ENCODE measurements at regions of chr14 and their contacts with region 1.

Region 1: GRCh38 chr14:92612988-92613658 is 99.5 kb downstream of the RIN3 start:
- DNase-seq: peak; percentile 61 to 71 (median 65)
- H3K4me3 ChIP-seq: no peak overlapping the region
- H3K27ac ChIP-seq: no peak overlapping the region
- H3K4me1 ChIP-seq: peaks cover 2 to 47% (median 19%) of the 10 kb centered on the region in 4 experiments
- H3K27me3 ChIP-seq: no peaks in the 10 kb centered on the region

Region 2: GRCh38 chr14:92651106-92651757 is 38.1 kb after region 1 on chr14:
- CTCF ChIA-PET with region 1: interaction called, 43 read pairs
- POLR2A ChIA-PET with region 1: interaction called, 3 read pairs
- DNase-seq: peak; percentile 90 to 98 (median 97)
- H3K4me3 ChIP-seq: peak overlapping the region in 6 of 7 experiments; percentile 29 to 98 (median 58)
- H3K27ac ChIP-seq: peak overlapping the region; percentile 92 to 93
- H3K4me1 ChIP-seq: peaks cover 34 to 92% (median 87%) of the 10 kb centered on the region in 4 experiments
- H3K27me3 ChIP-seq: no peaks in the 10 kb centered on the region

Region 3: GRCh38 chr14:92670160-92670559 is 57.0 kb after region 1 on chr14:
- CTCF ChIA-PET with region 1: interaction called, 15 read pairs
- POLR2A ChIA-PET with region 1: no interaction called
- DNase-seq: peak; percentile 74 to 94 (median 92)
- H3K4me3 ChIP-seq: peak overlapping the region in 3 of 7 experiments; percentile 1 to 31 (median 11)
- H3K27ac ChIP-seq: peak overlapping the region; percentile 26 to 73
- H3K4me1 ChIP-seq: peaks cover 7 to 81% (median 75%) of the 10 kb centered on the region in 4 experiments
- H3K27me3 ChIP-seq: no peaks in the 10 kb centered on the region

Region 4: GRCh38 chr14:92675976-92676375 is 62.9 kb after region 1 on chr14:
- CTCF ChIA-PET with region 1: interaction called, 263 read pairs
- POLR2A ChIA-PET with region 1: no interaction called
- DNase-seq: peak in 2 of 3 donors; percentile 66
- H3K4me3 ChIP-seq: peak overlapping the region in 2 of 7 experiments; percentile 17 to 27
- H3K27ac ChIP-seq: peak overlapping the region; percentile 19 to 60
- H3K4me1 ChIP-seq: peaks cover 0 to 54% (median 47%) of the 10 kb centered on the region in 4 experiments
- H3K27me3 ChIP-seq: no peaks in the 10 kb centered on the region

Region 5: DNA sequence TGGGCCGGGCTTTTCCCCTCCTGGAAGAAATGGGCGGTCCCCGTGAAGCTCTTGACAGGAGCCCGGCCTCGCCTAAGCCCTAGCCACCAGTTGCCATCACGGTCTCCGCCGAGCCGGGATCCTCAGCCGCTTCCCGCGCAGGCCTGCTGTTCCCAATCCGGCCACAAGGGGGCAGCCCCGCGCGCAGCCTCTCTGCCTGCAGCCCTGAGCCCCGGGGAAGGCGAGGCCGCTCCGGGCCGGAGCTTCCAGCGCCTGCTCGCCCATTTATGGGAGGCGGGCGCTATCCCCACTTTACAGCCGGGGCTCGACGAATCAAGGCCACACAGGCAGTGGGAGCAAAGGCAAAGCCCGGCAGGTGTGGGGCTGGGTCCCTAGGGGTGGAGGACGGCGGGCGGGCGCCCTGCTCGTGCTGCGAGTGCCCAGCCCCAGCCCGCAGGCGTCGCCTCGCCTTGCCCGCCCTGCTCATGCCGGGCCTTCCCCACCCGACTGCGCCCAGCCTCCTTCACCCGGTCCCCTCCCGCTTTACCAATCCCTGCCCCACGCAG is 73.8 kb after region 1 on chr14:
- CTCF ChIA-PET with region 1: interaction called, 263 read pairs
- POLR2A ChIA-PET with region 1: no interaction called
- DNase-seq: peak in 2 of 3 donors; percentile 44 to 68
- H3K4me3 ChIP-seq: no peak overlapping the region
- H3K27ac ChIP-seq: no peak overlapping the region
- H3K4me1 ChIP-seq: peaks cover 0 to 3% (median 2%) of the 10 kb centered on the region in 4 experiments
- H3K27me3 ChIP-seq: no peaks in the 10 kb centered on the region

Region 6: DNA sequence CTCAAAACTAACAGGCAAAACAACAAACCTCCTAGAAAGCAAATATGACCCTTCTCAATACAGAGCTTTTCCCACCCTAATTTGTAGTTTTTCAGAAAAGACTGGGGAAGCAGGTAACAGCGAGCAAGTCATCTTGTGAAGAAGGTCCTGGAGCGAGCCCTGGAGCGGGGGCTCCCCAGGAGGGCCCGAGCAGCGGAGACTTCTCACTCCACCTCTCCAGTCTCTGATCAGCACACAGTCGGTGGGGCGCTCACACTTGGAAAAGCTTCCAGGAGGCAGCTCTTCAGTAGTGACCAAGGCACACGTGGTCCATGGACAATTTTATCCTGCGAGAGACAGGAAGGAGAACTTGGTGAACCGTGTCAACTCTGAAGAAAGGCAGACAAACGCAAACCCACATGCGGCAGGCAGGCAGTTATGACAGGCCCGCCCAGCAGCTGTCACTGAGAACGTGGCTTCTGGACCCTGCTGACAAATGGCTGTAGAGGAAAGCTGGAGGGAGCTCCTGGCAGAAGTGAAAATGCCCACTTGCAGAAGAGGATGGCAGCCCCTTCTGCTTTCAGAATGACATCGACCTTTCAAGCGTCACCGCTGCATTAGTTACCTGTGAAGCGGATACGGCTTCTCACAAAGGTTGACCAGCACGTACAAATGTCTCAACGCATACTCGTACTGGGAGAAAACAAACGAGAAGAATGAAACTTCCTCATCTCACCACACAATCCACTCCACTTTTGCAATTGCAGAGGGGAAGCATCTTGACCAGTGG is 91.1 kb after region 1 on chr14:
- CTCF ChIA-PET with region 1: no interaction called
- POLR2A ChIA-PET with region 1: no interaction called
- DNase-seq: peak; percentile 24 to 85 (median 76)
- H3K4me3 ChIP-seq: peak overlapping the region in 4 of 7 experiments; percentile 8 to 53 (median 45)
- H3K27ac ChIP-seq: no peak overlapping the region
- H3K4me1 ChIP-seq: peaks cover 4 to 33% (median 21%) of the 10 kb centered on the region in 4 experiments
- H3K27me3 ChIP-seq: no peaks in the 10 kb centered on the region

Measured in common myeloid progenitor, CD34-positive (primary cell).